Prostate gland (tissue), 2 donors: ENCODE measurements at regions of chr3 and their contacts with region 1.

Region 1: GRCh38 chr3:36729204-36730056 is 34.9 kb downstream of the DCLK3 start:
- DNase-seq: no peak
- H3K4me3 ChIP-seq: no peak overlapping the region
- H3K27ac ChIP-seq: no peak overlapping the region
- H3K4me1 ChIP-seq: no peaks in the 10 kb centered on the region
- H3K27me3 ChIP-seq: peaks cover 2% of the 10 kb centered on the region
- CTCF ChIP-seq: peak; percentile 17 to 87 (median 69)
- POLR2A ChIP-seq: no peak

Region 2: DNA sequence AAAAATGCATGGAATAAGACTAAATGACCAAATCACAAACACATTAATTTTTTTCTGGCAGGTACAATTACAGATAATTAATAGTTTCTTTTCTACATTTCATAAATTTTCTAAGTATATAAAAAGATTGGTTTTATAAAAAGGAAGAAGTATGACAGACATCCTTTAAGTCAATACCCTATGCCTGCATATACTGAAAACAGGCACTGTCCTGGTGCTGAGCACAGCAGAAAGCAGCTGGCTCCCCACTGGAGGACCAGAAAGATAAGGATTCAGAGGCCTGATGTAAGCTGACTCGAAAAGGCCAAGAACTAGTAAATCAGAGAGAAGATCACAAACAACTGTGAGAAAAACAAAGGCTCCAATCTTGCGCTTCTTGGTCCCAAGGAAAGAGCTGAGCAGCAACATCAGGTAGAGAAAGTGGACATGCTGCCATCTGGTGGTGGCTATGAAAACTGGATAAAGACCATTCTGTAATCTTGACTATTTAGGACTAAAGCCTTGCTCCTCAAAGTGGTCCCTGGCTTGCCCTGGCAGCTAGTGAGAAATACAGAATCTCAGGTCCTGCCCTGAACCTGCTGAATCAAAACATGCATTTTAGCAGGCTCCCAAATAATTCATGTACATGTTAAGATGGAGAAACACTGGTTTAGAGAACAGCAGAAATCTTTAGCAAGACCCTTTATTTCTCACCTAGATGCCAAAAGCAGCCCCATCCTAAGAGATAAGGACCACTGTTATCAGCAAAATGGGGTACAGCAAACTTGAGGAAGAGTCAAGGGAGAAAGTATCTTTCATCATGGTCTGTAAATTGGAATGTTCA is 139.4 kb after region 1 on chr3:
- intact Hi-C with region 1: loop called (anchors 2 kb)
- DNase-seq: peak; percentile 38
- H3K4me3 ChIP-seq: no peak overlapping the region
- H3K27ac ChIP-seq: no peak overlapping the region
- H3K4me1 ChIP-seq: no peaks in the 10 kb centered on the region
- H3K27me3 ChIP-seq: no peaks in the 10 kb centered on the region
- CTCF ChIP-seq: peak; percentile 58 to 73 (median 66)
- POLR2A ChIP-seq: no peak